Activated CD8-positive, alpha-beta memory T cell treated with anti-CD3 and anti-CD28 coated beads, Interleukin-2, amount 10 ng/mL, durations not matched to agents 7 days and 5 days (primary cell): ENCODE measurements at regions of chr6 and their contacts with region 1.

Region 1: GRCh38 chr6:134938896-134939295 is 11.0 kb downstream of the ALDH8A1 start:
- DNase-seq: peak; percentile 64
- ATAC-seq: peak; percentile 79
- H3K4me3 Mint-ChIP-seq: no peak overlapping the region
- H3K27ac Mint-ChIP-seq: no peak overlapping the region
- H3K4me1 Mint-ChIP-seq: peaks cover 11% of the 10 kb centered on the region
- H3K27me3 Mint-ChIP-seq: no peaks in the 10 kb centered on the region

Region 2: DNA sequence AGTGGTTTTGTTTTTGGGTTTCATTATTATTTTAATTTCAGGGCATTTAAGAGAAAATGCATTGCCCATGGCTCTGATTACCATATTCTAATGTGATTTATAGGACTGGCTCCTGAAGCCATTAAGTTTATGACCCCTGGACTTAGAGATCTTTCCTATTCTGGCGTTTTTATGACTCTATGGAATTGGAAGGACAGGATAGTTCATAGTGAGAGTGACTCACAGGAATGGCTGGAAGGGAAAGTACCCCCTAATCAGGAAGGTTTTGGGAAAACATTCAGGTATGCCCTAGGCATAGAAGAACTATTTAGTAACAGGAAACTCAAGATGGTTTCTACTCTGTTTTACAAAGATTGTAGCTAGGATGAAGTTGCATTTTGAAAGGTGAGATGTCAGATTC is 777.9 kb before region 1 on chr6:
- CTCF ChIA-PET with region 1: interaction called, 24 read pairs
- DNase-seq: no peak
- ATAC-seq: no peak
- H3K4me3 Mint-ChIP-seq: no peak overlapping the region
- H3K27ac Mint-ChIP-seq: no peak overlapping the region
- H3K4me1 Mint-ChIP-seq: no peaks in the 10 kb centered on the region
- H3K27me3 Mint-ChIP-seq: no peaks in the 10 kb centered on the region

Region 3: DNA sequence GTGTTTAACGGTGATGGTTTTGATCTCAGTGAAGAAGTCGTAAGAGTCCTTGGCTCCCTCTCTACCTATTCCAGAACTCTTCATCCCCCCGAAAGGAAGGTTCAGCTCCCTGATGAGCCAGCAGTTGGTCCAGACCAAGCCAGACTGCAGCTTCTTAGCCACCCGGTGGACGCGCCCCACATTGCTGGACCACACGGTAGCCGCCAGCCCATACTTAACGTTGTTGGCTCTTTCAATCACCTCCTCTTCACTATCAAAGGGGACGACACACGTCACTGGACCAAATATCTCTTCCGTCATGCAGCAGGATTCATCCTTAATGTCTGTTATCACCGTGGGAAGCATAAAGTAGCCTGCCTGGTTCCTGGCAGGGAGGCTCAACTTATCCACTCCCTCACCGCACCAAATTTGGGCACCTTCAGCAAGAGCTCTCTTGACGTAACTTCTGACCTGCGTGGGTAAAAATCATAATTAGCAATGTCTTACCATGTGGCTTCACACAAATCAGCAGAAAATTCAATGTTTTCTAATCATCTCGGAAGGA is 20.4 kb before region 1 on chr6:
- CTCF ChIA-PET with region 1: interaction called, 20 read pairs
- DNase-seq: no peak
- ATAC-seq: no peak
- H3K4me3 Mint-ChIP-seq: no peak overlapping the region
- H3K27ac Mint-ChIP-seq: no peak overlapping the region
- H3K4me1 Mint-ChIP-seq: no peaks in the 10 kb centered on the region
- H3K27me3 Mint-ChIP-seq: no peaks in the 10 kb centered on the region

Region 4: DNA sequence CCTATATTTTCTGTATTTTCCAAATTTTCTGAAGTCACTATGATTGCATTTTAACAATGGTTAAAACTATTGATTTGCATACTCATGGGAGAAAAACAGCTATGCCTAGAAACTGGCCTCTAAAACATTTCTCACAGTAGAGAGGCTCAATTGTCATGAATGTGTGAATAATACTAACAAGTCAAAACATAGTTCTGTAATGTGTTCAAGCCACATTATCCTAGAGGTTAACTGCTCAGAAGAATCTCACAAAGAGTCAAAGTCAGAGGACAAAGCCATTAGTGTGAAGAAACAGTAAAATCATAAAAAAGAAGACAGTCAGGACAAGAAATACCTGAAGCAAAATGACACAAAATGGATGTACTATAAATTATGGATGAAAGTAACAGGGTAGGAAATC is 23.5 kb after region 1 on chr6:
- CTCF ChIA-PET with region 1: interaction called, 13 read pairs
- DNase-seq: no peak
- ATAC-seq: no peak
- H3K4me3 Mint-ChIP-seq: no peak overlapping the region
- H3K27ac Mint-ChIP-seq: no peak overlapping the region
- H3K4me1 Mint-ChIP-seq: peaks cover 8% of the 10 kb centered on the region
- H3K27me3 Mint-ChIP-seq: no peaks in the 10 kb centered on the region